GM12878 (cell line): ENCODE measurements at regions of chr3 and their contacts with region 1.

Region 1: DNA sequence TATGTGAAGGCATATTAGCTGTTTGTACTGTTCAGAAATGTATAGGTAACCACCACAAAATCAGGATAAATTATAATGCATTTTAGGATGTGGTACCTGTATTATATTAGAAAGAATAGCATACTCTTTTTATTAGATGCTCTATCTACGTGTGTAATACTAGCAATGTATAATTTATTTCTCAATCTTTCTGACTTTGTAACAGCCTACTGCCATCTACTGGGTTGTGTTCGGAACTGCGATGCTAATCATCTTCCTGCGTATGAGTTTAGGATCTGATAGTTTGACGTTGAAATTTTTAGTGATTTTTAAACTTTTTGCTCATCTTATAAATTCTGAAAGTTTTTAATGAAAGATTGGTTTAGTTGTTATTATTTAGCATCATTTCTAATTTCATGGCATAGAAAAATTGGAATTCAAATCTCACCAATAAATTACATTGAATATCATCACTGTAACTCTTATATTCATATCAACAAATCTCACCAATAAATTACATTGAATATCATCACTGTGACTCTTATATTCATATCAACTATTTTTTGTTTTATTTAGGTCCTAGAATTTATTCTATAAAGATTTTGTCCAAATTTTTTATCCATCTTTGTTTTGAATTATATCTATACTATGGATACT is 322.7 kb upstream of the ZNF717 start:
- DNase-seq: no peak
- ATAC-seq: peak; percentile 51; the same call in 2 of the 3 replicates
- H3K4me3 ChIP-seq: no peak overlapping the region
- H3K27ac ChIP-seq: no peak overlapping the region
- H3K4me1 ChIP-seq: no peaks in the 10 kb centered on the region
- H3K27me3 ChIP-seq: no peaks in the 10 kb centered on the region
- CTCF ChIP-seq: peak; percentile 46 to 55 (median 51)
- EP300 ChIP-seq: no peak
- POLR2A ChIP-seq: no peak
- RAD21 ChIP-seq: peak; percentile 56

Region 2: GRCh38 chr3:75727985-75728384 is 380.1 kb before region 1 on chr3:
- CTCF ChIA-PET with region 1: interaction called, 3 read pairs
- POLR2A ChIA-PET with region 1: no interaction called
- RAD21 ChIA-PET with region 1: no interaction called
- SMC1A ChIA-PET with region 1: no interaction called
- in situ Hi-C with region 1: no loop called
- intact Hi-C with region 1: loop called (anchors 10 kb)
- DNase-seq: no peak
- ATAC-seq: no peak
- H3K4me3 ChIP-seq: no peak overlapping the region
- H3K27ac ChIP-seq: no peak overlapping the region
- H3K4me1 ChIP-seq: no peaks in the 10 kb centered on the region
- H3K27me3 ChIP-seq: no peaks in the 10 kb centered on the region
- CTCF ChIP-seq: no peak
- EP300 ChIP-seq: no peak
- POLR2A ChIP-seq: no peak
- RAD21 ChIP-seq: no peak